ENCODE measurements at regions of chr11 and their contacts with region 1.

Region 1: GRCh38 chr11:68297812-68298658 is 14.4 kb upstream of the LRP5 start:
- DNase-seq: peak; percentile 84 to 94
- ATAC-seq: peak; percentile 97
- H3K4me3 ChIP-seq: no peak overlapping the region
- H3K27ac ChIP-seq: no peak overlapping the region
- H3K4me1 ChIP-seq: no peaks in the 10 kb centered on the region
- H3K27me3 ChIP-seq: no peaks in the 10 kb centered on the region

Region 2: DNA sequence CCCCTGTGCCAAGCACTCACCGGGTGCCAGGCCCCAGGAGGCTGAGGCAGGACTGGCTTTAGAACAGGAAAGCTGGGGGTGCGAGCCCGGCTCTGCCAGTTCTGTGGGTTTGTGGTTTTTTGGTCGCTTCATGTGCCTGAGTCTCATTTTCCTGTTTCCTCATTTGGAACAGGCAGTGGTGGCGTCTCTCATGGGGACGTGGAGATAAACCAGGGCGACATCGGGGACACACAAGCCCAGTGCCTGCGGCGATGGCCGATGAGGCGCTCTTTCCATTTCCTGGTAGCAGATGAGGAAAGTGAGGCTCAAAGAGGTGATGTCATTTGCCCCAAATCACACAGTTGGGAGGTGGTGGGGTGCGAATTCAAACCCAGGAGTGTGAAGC is 156.0 kb before region 1 on chr11:
- intact Hi-C with region 1: no loop called
- DNase-seq: peak; percentile 59
- ATAC-seq: no peak
- H3K4me3 ChIP-seq: no peak overlapping the region
- H3K27ac ChIP-seq: no peak overlapping the region
- H3K4me1 ChIP-seq: no peaks in the 10 kb centered on the region
- H3K27me3 ChIP-seq: no peaks in the 10 kb centered on the region

Region 3: DNA sequence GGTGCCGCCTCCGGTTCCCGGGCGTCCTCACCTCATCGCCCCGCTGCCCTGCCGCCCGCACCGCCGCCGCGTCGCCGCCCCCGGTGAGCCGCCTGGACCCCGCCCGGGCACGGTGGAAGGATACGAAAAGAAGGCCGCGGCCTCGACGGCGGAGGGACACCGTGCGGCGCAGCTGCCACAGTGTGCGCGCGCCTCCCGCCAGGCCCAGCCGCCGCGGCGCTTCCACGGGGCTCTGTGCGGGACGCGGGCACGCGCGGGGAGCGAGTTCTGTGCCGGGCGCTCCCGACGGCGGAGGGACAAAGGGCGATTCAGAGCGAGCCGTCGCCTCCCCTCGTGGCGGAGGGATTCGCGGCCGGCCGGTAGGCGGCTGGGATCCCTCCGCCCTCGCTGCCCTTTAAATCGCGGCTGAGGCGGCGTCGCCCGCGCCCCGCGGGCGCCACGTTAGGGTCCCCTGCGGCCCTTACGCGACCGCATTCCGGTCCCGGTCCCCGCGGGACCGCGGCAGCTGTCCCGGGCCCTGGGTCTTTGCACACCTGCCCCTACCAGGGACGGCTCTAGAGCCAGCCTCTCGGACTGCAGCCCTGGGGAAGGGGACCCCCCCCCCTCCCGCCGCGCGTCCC is 84.4 kb before region 1 on chr11:
- intact Hi-C with region 1: loop called in 1 of 2 experiments (anchors 1 kb)
- DNase-seq: peak; percentile 93
- ATAC-seq: peak; percentile 86
- H3K4me3 ChIP-seq: peak overlapping the region; percentile 88 to 91
- H3K27ac ChIP-seq: peak overlapping the region; percentile 93 to 100
- H3K4me1 ChIP-seq: peaks cover 0 to 4% of the 10 kb centered on the region in 2 donors
- H3K27me3 ChIP-seq: no peaks in the 10 kb centered on the region

Region 4: GRCh38 chr11:68257475-68258362 is 40.3 kb before region 1 on chr11:
- intact Hi-C with region 1: loop called (anchors 1 to 2 kb)
- DNase-seq: peak; percentile 98 to 99
- ATAC-seq: peak; percentile 89
- H3K4me3 ChIP-seq: no peak overlapping the region
- H3K27ac ChIP-seq: no peak overlapping the region
- H3K4me1 ChIP-seq: no peaks in the 10 kb centered on the region
- H3K27me3 ChIP-seq: no peaks in the 10 kb centered on the region

Region 5: GRCh38 chr11:68447015-68447801 is 149.2 kb after region 1 on chr11:
- intact Hi-C with region 1: loop called in 1 of 2 experiments (anchors 10 kb)
- DNase-seq: peak; percentile 87 to 91
- ATAC-seq: peak; percentile 88
- H3K4me3 ChIP-seq: no peak overlapping the region
- H3K27ac ChIP-seq: no peak overlapping the region
- H3K4me1 ChIP-seq: no peaks in the 10 kb centered on the region
- H3K27me3 ChIP-seq: no peaks in the 10 kb centered on the region